Astrocyte of the cerebellum (primary cell): ENCODE measurements at regions of chr16 and their contacts with region 1.

Region 1: DNA sequence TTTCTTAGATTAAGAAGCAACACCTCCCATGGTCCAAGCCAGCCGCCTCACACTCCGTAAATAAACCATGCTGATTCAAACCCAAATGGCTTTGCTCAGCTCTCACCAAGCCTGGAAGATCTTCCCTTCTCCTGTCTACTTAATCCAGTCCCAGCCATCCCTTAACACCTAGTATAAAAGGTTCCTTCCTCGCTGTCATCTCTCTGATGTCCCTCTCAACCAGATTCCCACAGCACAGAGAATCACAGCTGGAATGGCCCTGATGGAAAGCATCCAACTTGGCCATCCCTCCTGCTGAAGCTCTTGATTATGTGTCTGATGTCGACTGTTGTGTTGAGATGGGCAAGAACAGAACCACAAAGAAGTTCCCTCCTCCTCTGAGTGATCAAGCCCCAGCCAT is 50.6 kb upstream of the ADCY9 start:
- DNase-seq: no peak
- H3K4me3 ChIP-seq: no peak overlapping the region
- CTCF ChIP-seq: no peak

Region 2: GRCh38 chr16:4217204-4218131 is 50.6 kb after region 1 on chr16:
- in situ Hi-C with region 1: loop called (anchors 5 kb)
- DNase-seq: peak; percentile 19
- H3K4me3 ChIP-seq: no peak overlapping the region
- CTCF ChIP-seq: no peak